Adrenal gland (tissue), 19 donors: ENCODE measurements at regions of chr2 and their contacts with region 1.

Region 1: DNA sequence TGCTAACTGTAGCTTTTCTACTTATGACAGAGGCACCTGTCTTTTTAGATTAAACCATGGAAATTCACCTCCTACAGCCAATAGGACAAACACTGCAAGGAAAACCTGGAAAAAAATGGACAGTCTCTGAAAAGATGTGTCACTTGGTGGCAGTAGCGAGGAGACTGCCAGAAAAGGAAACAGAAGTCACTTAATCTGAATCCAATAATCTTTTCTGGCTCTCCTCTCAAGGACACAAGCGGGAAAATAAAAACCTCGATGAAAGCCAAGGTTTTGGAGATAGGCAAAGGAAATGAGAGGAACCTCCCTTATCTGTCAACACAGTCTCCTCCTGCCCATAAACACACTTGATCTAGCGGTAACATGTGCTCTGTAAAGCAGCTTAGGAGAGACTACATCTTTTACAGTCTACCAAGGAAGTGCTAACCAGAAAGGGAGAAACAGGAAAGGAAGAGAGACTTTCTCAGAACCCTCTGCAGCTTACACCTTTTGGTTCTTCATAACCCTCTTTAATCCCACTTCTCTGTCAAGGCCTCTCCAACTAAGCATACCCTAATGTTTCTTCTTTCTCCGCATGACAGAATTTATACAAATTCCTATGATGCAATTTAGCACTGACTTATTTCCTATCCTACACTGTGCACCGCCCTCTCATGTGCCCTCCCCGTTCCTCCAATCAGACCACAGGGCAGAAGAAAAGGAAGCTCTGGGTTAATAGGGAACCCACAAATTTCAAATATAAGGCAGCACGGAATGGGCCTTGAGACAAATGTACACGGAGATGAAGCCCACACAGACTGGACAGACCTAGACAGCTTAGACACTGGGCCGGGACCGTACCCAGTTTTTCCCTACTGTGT is 52.8 kb downstream of the CLASP1 start:
- DNase-seq: peak; percentile 48 to 82 (median 65)
- H3K4me3 ChIP-seq: peak overlapping the region in 1 of 4 donors; percentile 41
- H3K27ac ChIP-seq: peak overlapping the region in 4 of 5 donors; percentile 54 to 80 (median 68)
- H3K4me1 ChIP-seq: peaks cover 5 to 49% of the 10 kb centered on the region in 2 donors
- H3K27me3 ChIP-seq: no peaks in the 10 kb centered on the region
- CTCF ChIP-seq: peak; percentile 38 to 68 (median 49)
- POLR2A ChIP-seq: no peak

Region 2: GRCh38 chr2:121649596-121650314 is 53.3 kb after region 1 on chr2:
- intact Hi-C with region 1: loop called in 1 of 2 experiments (anchors 5 kb)
- DNase-seq: peak; percentile 96 to 99 (median 98)
- H3K4me3 ChIP-seq: peak overlapping the region; percentile 17 to 82 (median 68)
- H3K27ac ChIP-seq: peak overlapping the region; percentile 76 to 97 (median 92)
- H3K4me1 ChIP-seq: peaks cover 16 to 50% of the 10 kb centered on the region in 2 donors
- H3K27me3 ChIP-seq: no peaks in the 10 kb centered on the region
- CTCF ChIP-seq: no peak
- POLR2A ChIP-seq: no peak

Region 3: DNA sequence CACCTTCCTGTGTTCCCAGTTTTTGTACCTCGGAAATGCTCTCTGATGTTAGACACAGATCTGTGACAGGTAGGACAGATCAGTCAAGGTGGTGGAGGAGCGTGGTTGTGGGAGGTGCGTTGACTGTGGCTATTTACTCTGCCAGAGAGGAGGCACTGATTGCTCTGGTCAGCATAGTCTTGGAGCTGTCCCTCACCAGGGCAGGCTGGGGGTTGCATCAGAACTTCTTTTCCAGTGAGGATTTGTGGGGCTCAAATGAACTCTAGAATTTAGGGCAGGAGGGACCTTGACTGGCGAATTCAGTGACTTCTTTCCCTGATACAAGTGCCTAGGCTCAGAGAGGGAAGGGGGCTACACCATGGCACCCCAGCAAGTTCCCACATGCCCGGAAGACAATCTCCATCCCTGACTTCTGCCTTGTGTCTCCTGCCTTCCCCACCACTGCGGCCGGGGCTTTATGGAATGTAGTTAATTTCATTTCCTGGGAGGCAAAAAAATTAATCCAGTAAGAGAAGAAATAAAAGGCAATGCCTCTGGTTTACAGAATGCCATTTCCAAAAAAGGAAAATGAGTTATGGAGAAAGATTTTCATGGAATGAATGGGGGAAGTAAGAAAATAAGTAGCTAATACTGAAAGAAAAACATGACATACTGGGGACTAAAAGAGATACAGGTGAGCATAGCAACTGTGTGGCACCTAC is 114.2 kb after region 1 on chr2:
- intact Hi-C with region 1: loop called in 1 of 2 experiments (anchors 10 kb)
- DNase-seq: no peak
- H3K4me3 ChIP-seq: no peak overlapping the region
- H3K27ac ChIP-seq: no peak overlapping the region
- H3K4me1 ChIP-seq: no peaks in the 10 kb centered on the region
- H3K27me3 ChIP-seq: no peaks in the 10 kb centered on the region
- CTCF ChIP-seq: no peak
- POLR2A ChIP-seq: no peak

Region 4: GRCh38 chr2:121910139-121910538 is 313.7 kb after region 1 on chr2:
- intact Hi-C with region 1: no loop called
- DNase-seq: no peak
- H3K4me3 ChIP-seq: no peak overlapping the region
- H3K27ac ChIP-seq: no peak overlapping the region
- H3K4me1 ChIP-seq: no peaks in the 10 kb centered on the region
- H3K27me3 ChIP-seq: no peaks in the 10 kb centered on the region
- CTCF ChIP-seq: no peak
- POLR2A ChIP-seq: no peak